Posterior vena cava (tissue), 2 donors: ENCODE measurements at regions of chr2 and their contacts with region 1.

Region 1: GRCh38 chr2:118128826-118129225 is 40.6 kb downstream of the INSIG2 start:
- DNase-seq: no peak

Region 2: GRCh38 chr2:118177884-118178283 is 49.1 kb after region 1 on chr2:
- intact Hi-C with region 1: loop called (anchors 1 to 10 kb)
- DNase-seq: no peak

Region 3: DNA sequence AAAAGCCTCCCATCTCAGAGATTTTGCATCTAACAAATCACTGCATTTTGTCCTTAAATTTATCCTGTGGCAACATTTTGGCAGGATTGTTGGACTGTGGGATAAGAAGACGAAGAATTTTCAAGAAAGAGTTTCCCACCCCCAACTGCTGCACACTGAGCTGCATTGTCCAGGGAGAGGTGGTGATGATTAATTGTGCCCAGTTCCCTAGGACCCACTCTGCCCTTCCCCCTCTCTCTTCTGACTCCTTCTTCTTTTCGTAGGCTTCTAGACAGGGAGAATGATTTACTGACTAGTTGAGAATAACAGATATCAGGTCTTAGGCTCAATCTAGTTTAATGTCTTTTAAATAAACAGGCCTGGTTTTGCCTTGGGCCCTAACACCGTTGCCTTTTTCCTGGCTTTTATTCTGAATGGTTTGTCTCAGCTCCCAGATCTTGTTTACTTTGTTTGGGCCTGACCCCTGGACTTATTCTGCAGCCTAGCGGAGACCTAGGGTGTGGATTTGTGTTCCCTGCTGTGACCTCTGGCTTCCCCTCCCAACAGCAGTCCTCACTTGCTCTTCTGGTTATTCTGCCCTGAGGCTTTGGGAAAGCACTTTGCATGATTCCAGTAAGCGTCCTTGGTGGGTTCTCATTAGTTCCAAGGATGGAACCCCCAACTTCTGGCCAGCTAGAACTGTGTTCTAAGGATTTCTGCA is 192.8 kb after region 1 on chr2:
- intact Hi-C with region 1: no loop called
- DNase-seq: no peak

Region 4: GRCh38 chr2:118403658-118404451 is 275.0 kb after region 1 on chr2:
- intact Hi-C with region 1: loop called in 1 of 2 experiments (anchors 5 kb)
- DNase-seq: no peak